ENCODE measurements at regions of chr6 and their contacts with region 1.

Region 1: DNA sequence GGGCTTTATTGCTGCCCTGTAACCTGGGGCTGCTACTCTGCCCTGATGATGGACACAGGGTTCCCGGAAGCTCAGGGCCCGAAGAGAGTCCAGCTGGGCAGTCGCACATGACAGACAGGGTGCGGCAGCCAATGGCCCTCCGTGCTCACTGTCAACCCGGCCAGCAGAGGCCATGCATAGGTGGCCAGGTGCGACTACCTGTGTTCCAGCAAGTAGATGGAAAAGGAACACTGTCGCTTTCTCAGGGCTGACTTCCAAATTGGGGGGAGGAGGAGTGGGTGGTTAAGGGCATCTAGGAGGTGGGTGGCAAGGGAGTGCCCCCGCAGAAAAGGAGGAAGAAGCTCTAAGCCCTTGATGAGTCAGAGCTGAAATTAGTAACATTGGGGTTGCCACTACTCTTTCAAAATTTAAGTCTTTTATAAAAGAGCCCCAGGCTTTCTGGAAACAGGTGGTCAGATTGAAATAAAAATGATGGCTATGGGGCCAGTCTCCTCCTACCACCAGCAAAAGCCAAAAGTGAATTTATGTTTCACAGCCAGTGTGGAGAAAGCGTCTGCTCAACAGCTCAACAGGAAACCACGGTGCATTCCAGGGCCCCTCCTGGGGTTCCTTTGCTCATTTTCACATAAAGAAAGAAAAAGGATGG is 2.3 kb upstream of the RAMACL start:
- DNase-seq: peak; percentile 48
- ATAC-seq: peak; percentile 55
- H3K4me3 ChIP-seq: peak overlapping the region; percentile 57
- H3K27ac ChIP-seq: peak overlapping the region; percentile 73
- H3K4me1 ChIP-seq: peaks cover 32% of the 10 kb centered on the region
- H3K27me3 ChIP-seq: no peaks in the 10 kb centered on the region
- CTCF ChIP-seq: no peak
- EP300 ChIP-seq: no peak; a peak in 1 of 4 replicates
- POLR2A ChIP-seq: no peak
- RAD21 ChIP-seq: no peak

Region 2: GRCh38 chr6:166127624-166128472 is 461.0 kb before region 1 on chr6:
- CTCF ChIA-PET with region 1: no interaction called
- POLR2A ChIA-PET with region 1: no interaction called
- RAD21 ChIA-PET with region 1: no interaction called
- SMC1A ChIA-PET with region 1: no interaction called
- in situ Hi-C with region 1: no loop called
- intact Hi-C with region 1: no loop called
- DNase-seq: no peak
- ATAC-seq: no peak
- H3K4me3 ChIP-seq: no peak overlapping the region
- H3K27ac ChIP-seq: no peak overlapping the region
- H3K4me1 ChIP-seq: no peaks in the 10 kb centered on the region
- H3K27me3 ChIP-seq: no peaks in the 10 kb centered on the region
- CTCF ChIP-seq: no peak
- EP300 ChIP-seq: no peak
- POLR2A ChIP-seq: no peak
- RAD21 ChIP-seq: no peak

Region 3: GRCh38 chr6:166179704-166180103 is 409.1 kb before region 1 on chr6:
- CTCF ChIA-PET with region 1: no interaction called
- POLR2A ChIA-PET with region 1: no interaction called
- RAD21 ChIA-PET with region 1: no interaction called
- SMC1A ChIA-PET with region 1: no interaction called
- in situ Hi-C with region 1: no loop called
- intact Hi-C with region 1: no loop called
- DNase-seq: no peak
- ATAC-seq: peak; percentile 48; the same call in 2 of the 3 replicates
- H3K4me3 ChIP-seq: no peak overlapping the region
- H3K27ac ChIP-seq: no peak overlapping the region
- H3K4me1 ChIP-seq: peaks cover 4% of the 10 kb centered on the region; the same call in 1 of the 2 replicates
- H3K27me3 ChIP-seq: 0 out of 4 replicates have a peak, but pooled peaks cover 0 to 3% of the 10 kb centered on the region in 2 experiments
- CTCF ChIP-seq: no peak
- EP300 ChIP-seq: no peak
- POLR2A ChIP-seq: no peak
- RAD21 ChIP-seq: no peak

Region 4: GRCh38 chr6:166488076-166488685 is 100.6 kb before region 1 on chr6:
- CTCF ChIA-PET with region 1: interaction called, 10 read pairs
- POLR2A ChIA-PET with region 1: no interaction called
- RAD21 ChIA-PET with region 1: no interaction called
- SMC1A ChIA-PET with region 1: no interaction called
- in situ Hi-C with region 1: no loop called
- intact Hi-C with region 1: no loop called
- DNase-seq: peak; percentile 80
- ATAC-seq: peak; percentile 86
- H3K4me3 ChIP-seq: peak overlapping the region; percentile 42; the same call in 1 of the 2 replicates
- H3K27ac ChIP-seq: peak overlapping the region; percentile 59
- H3K4me1 ChIP-seq: peaks cover 9% of the 10 kb centered on the region
- H3K27me3 ChIP-seq: no peaks in the 10 kb centered on the region
- CTCF ChIP-seq: no peak
- EP300 ChIP-seq: no peak
- POLR2A ChIP-seq: peak; percentile 58
- RAD21 ChIP-seq: no peak

Region 5: DNA sequence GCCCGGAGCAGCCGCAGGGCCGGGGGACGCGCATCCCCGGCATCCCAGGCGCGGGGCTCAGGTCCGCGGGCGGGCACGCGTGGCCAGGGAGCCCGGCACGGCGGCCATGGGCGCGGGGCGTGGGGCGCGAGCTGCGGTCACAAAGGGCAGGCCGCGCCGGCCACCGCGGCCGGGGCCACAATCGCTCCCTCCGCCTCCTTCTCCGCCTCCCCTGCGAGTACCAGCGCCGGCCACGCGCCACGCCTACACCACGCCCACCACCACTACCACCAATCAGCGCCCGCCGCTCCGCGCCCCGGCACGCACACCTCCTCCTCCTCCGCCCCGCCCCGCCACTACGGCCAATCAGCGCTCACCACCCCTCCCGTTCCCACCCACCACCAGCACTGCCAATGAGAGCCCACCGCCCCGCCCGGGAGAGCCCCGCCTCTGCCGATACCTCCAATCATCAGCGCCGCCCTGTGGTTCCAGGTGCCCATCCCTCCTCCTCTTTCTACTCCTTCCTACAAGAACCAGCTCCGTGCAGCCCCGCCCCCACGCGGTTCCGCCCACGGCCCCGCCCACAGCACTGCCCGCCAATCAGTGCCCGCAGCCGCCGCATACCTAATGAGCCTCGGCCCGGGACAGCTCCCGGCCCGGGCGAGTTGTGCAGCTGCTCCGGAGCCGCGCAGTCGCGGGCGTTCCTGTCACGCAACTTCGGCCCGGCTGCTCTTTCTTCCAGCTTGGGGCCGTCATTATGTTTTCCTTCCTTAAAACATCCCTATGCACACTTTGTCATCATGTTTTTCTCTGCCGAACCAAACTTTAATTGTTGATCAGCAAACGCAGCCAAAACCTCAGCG is 38.4 kb after region 1 on chr6 and contains the start of gene RPS6KA2:
- CTCF ChIA-PET with region 1: no interaction called
- POLR2A ChIA-PET with region 1: interaction called, 3 read pairs
- RAD21 ChIA-PET with region 1: interaction called, 8 read pairs
- SMC1A ChIA-PET with region 1: interaction called, 3 read pairs
- in situ Hi-C with region 1: no loop called
- intact Hi-C with region 1: loop called (anchors 2 kb)
- DNase-seq: peak; percentile 93
- ATAC-seq: peak; percentile 97
- H3K4me3 ChIP-seq: peak within 1 kb of the TSS; percentile 86
- H3K27ac ChIP-seq: peak within 1 kb of the TSS; percentile 42
- H3K4me1 ChIP-seq: peaks cover 17% of the 10 kb centered on the region
- H3K27me3 ChIP-seq: peaks cover 3 to 6% of the 10 kb centered on the region in 2 experiments; a peak in 2 of 4 replicates
- CTCF ChIP-seq: no peak; a peak in 1 of 6 replicates
- EP300 ChIP-seq: no peak
- POLR2A ChIP-seq: peak; percentile 71
- RAD21 ChIP-seq: no peak
- polyA plus RNA-seq, gene RPS6KA2: 0.02 TPM in 1 of 2 experiments, not detected in the other

Region 6: GRCh38 chr6:166671434-166672081 is 82.7 kb after region 1 on chr6:
- CTCF ChIA-PET with region 1: no interaction called
- POLR2A ChIA-PET with region 1: no interaction called
- RAD21 ChIA-PET with region 1: no interaction called
- SMC1A ChIA-PET with region 1: no interaction called
- in situ Hi-C with region 1: no loop called
- intact Hi-C with region 1: no loop called
- DNase-seq: no peak
- ATAC-seq: no peak
- H3K4me3 ChIP-seq: no peak overlapping the region
- H3K27ac ChIP-seq: no peak overlapping the region
- H3K4me1 ChIP-seq: no peaks in the 10 kb centered on the region
- H3K27me3 ChIP-seq: peaks cover 0 to 4% of the 10 kb centered on the region in 2 experiments; a peak in 1 of 4 replicates
- CTCF ChIP-seq: no peak
- EP300 ChIP-seq: no peak
- POLR2A ChIP-seq: no peak
- RAD21 ChIP-seq: no peak

Region 7: DNA sequence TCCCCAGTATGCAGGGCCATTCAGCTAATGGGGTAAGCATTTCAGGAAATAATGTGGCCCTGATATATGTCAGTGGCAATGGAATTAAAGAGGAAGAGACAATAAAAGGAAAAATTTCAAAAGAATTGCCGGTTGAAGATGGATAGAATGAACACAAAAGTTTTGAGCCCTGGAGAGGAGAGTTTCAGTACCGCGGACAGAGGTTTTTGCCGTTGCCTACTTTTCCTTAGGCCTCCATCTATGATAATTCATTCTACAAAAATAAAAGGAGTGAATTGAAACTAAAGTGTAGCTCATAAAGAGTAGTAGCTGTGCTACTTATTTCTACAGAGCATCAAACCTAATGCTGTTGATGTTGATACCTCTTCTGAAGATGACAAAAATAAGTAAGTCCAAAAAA is 226.8 kb after region 1 on chr6:
- CTCF ChIA-PET with region 1: no interaction called
- POLR2A ChIA-PET with region 1: no interaction called
- RAD21 ChIA-PET with region 1: no interaction called
- SMC1A ChIA-PET with region 1: no interaction called
- in situ Hi-C with region 1: no loop called
- intact Hi-C with region 1: no loop called
- DNase-seq: no peak
- ATAC-seq: no peak
- H3K4me3 ChIP-seq: no peak overlapping the region
- H3K27ac ChIP-seq: no peak overlapping the region
- H3K4me1 ChIP-seq: no peaks in the 10 kb centered on the region
- H3K27me3 ChIP-seq: no peaks in the 10 kb centered on the region
- CTCF ChIP-seq: no peak
- EP300 ChIP-seq: no peak
- POLR2A ChIP-seq: no peak
- RAD21 ChIP-seq: no peak